ENCODE measurements at regions of chr14 and their contacts with region 1.

Region 1: DNA sequence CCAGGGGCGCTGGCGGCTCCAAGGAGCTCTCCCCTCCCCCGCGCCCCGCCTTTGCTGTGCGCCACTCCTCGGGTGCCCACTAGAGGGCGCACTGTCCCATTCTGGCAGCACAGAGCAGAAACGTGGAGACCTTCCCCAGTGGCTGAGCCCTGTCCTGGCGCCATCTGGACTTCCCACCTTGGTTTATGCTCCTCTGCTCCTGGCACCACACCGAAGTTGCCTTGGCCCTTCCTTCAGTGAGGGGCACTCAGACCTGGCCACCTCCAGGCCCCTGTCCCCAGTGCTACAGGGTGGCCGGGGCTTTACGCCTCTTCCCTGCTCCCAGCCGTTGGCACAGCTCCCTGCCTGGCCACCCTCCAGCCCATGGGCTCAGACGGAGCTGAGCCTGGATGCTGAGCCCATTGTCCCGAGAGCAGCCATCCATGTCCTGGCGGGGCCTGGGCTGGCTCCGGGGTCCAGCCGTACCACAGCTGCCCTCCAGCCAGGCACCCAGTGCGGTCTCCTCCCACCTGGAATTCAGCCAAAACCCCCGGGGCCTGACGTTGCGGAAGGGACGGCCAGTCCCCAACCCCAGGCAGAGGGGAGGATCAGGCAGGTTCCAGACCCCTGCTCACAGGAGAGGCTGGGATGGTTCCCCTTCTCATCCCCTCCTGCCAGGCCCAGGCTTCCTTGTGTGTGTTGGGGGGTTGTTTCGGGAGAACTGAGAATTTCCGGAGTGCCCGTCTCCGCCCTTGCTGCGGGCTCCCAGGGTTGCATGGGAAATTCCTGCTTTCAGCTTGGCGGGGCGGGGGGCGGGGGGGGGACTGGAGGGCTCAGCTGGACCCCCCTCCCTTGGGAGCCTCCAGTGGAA is 5.5 kb upstream of the CRIP1 start:
- DNase-seq: peak; percentile 90

Region 2: GRCh38 chr14:105470804-105471610 is 10.2 kb before region 1 on chr14:
- CTCF ChIA-PET with region 1: interaction called, 23 read pairs
- POLR2A ChIA-PET with region 1: interaction called, 4 read pairs
- DNase-seq: peak; percentile 42

Region 3: DNA sequence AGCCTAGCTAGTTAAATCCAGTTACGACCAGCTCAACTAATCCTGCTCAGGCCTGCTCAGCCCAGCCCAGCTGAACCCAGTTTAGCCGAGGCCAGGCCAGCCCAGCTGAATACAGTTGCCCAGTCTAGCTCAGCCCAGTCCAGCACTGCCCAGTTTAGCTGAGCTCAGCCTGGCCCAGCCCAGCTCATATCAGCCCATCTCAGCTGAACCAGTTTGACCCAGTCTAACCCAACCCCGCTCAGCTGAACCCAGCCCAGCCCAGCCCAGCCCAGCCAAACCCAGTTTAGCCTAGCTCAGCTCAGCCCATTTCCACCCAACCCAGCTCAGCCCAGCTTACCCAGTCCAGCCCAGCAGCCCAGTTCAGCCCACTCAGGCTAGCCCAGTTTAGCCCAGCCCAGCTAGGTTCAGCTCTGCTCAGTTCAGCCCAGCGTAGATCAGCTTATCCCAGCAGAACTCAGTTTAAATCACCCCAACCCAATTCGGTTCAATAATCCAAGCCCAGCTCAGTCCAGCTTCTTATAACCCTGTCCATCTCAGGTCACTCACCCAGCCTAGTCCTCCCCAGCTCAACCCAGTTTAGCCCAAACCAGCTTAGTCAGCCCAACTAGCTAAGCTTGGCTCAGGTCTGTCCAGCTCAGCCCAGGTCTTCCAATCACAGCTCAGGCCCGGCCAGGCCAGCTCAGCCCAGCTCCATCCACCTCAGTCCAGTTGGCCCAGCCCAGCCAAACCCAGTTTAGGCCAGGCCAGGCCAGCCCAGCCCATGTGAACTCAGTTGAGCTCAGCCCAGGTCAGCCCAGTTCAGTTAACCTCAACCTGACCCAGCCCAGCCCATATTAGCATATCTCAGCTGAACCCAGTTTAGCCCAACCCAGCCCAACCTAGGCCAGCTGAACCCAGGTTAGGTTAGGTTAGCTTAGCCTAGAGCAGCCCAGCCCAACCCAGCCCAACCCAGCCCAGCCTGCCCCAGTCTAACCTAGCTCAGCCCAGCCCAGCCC is 121.9 kb after region 1 on chr14:
- CTCF ChIA-PET with region 1: no interaction called
- POLR2A ChIA-PET with region 1: no interaction called
- DNase-seq: no peak

Measured in HEK293T (cell line).